Head of caudate nucleus (tissue), 42 donors: ENCODE measurements at regions of chr5 and their contacts with region 1.

Region 1: DNA sequence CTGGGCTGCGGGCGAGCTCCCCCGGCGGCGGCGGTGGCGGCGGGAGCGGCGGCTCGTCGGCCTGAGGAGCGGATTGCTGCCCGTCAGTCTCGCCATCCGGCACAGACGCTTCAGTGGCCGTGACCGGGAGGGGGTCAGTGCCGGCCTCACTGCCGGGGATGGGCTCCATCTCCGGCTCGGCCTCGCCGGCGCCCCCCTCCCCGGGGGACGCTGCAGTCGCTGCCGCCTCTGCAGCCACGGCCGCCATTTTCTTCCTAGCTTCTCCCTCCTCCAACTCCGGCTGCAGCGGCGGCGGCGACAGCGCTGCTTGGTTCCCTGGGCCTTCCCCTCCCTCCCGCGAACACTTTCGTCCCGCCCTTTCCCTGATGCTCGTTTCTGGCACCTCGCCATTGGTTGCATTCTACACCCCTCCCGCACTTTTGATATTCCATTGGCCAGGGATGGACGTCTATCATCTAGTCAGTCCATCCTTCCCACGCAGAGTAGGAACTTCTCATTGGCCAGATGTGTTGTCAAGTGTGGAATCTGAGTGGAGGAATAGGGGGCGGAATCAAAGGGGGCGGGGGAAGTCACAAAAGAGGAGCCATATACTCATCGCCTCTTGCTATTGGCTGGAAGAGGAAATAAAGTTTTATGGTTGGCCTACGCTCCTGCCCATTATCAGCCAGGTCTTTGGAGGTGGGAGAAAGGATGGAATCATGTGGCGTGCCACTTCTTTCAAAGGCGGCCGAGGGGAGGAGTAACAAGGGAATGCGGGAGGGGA is at the start of gene PWWP2A:
- DNase-seq: peak; percentile 97 to 100 (median 99)

Region 2: DNA sequence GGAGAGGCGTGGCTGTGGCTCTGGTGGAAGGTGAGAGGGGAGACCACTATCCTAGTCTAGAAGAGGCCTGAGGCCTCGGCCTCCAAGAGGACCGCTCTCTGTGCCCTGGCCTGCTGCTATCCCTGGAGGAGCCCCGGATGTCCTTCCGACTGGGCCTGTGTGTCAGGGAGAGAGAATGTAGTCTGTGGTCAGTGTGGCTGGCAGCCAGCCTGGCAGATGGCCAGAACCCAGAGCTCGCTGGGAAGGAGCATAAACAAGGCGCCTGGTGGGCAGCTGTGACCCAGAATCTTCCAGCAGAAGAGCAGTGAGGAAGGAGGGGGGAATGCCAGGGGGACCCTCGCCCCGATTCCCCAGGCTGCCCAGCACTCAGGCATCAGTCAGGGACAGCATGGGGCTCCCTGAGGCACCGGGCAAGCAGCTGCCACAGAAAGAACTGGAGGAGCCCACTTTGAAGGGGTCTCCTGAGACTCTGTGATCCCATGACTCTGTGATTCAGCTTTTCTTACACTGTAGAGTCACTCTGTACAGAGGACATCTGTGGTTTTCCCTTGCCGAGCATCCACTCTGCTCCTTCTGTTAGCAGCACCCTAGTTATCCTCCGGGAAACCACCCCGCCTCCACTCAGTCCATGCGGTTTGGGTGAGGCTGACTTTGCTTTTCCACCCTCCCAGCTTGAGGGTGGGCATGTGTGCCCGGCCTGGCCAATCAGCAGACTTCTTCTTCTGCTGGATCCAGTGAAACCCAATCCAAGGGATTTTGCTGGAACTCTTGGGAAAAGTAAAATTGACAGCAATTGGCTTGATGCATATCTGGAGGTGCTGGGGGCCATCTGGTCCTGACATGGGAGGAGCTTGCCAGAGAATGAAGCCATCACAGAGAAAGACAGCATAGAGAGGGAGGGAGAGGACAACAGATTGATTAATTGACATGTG is 46.1 kb after region 1 on chr5:
- intact Hi-C with region 1: loop called (anchors 2 kb)
- DNase-seq: peak; percentile 74 to 96 (median 89)

Region 3: GRCh38 chr5:160399402-160400353 is 280.4 kb after region 1 on chr5 and contains the start of gene FAM200C:
- intact Hi-C with region 1: loop called (anchors 10 kb)
- DNase-seq: peak; percentile 78 to 97 (median 93)